ENCODE measurements at regions of chr21 and their contacts with region 1.

Region 1: GRCh38 chr21:45140346-45140940 is 66.1 kb downstream of the ADARB1 start:
- DNase-seq: peak in 1 of 2 donors; percentile 85
- H3K4me3 ChIP-seq: no peak overlapping the region
- H3K27ac ChIP-seq: no peak overlapping the region
- H3K4me1 ChIP-seq: peaks cover 0 to 20% of the 10 kb centered on the region in 2 donors
- H3K27me3 ChIP-seq: no peaks in the 10 kb centered on the region
- CTCF ChIP-seq: peak; percentile 57 to 73 (median 71)

Region 2: DNA sequence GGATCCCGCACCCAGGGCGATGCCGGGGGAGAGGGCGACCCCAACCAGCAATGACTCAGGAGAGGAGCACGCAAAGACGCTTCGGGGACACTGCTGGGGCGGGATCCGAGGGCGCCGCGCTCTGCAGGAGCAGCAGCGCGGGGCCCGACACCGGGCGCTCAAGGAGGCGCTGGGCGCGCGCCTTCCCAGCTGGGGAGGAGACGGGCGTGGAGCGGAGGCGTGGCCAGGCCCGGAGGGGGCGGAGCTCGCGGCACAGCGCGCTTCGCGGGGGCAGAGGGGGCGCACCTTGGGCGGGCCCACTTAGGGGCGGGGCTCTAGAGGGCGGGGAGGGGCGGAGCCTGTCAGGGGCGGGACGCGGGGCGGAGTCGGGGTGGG is 322.9 kb before region 1 on chr21:
- intact Hi-C with region 1: loop called (anchors 10 kb)
- DNase-seq: peak; percentile 51 to 93
- H3K4me3 ChIP-seq: peak overlapping the region; percentile 60 to 85
- H3K27ac ChIP-seq: peak overlapping the region; percentile 73 to 82
- H3K4me1 ChIP-seq: peaks cover 5 to 12% of the 10 kb centered on the region in 2 donors
- H3K27me3 ChIP-seq: no peaks in the 10 kb centered on the region
- CTCF ChIP-seq: no peak

Region 3: GRCh38 chr21:44892536-44893277 is 247.7 kb before region 1 on chr21:
- intact Hi-C with region 1: loop called (anchors 2 kb)
- DNase-seq: peak in 1 of 2 donors; percentile 83
- H3K4me3 ChIP-seq: no peak overlapping the region
- H3K27ac ChIP-seq: no peak overlapping the region
- H3K4me1 ChIP-seq: no peaks in the 10 kb centered on the region
- H3K27me3 ChIP-seq: no peaks in the 10 kb centered on the region
- CTCF ChIP-seq: peak; percentile 73 to 88 (median 86)

Region 4: GRCh38 chr21:45192332-45192731 is 51.9 kb after region 1 on chr21:
- intact Hi-C with region 1: no loop called
- DNase-seq: no peak
- H3K4me3 ChIP-seq: no peak overlapping the region
- H3K27ac ChIP-seq: no peak overlapping the region
- H3K4me1 ChIP-seq: no peaks in the 10 kb centered on the region
- H3K27me3 ChIP-seq: no peaks in the 10 kb centered on the region
- CTCF ChIP-seq: no peak

Region 5: GRCh38 chr21:45287438-45288391 is 147.3 kb after region 1 on chr21 and contains the start of gene POFUT2:
- intact Hi-C with region 1: loop called (anchors 5 kb)
- DNase-seq: peak; percentile 83 to 98
- H3K4me3 ChIP-seq: peak within 1 kb of the TSS; percentile 61 to 98
- H3K27ac ChIP-seq: peak within 1 kb of the TSS; percentile 83 to 88
- H3K4me1 ChIP-seq: peaks cover 11 to 20% of the 10 kb centered on the region in 2 donors
- H3K27me3 ChIP-seq: no peaks in the 10 kb centered on the region
- CTCF ChIP-seq: peak in 1 of 3 experiments; percentile 5
- total RNA-seq, gene POFUT2: 39.4 TPM

Region 6: DNA sequence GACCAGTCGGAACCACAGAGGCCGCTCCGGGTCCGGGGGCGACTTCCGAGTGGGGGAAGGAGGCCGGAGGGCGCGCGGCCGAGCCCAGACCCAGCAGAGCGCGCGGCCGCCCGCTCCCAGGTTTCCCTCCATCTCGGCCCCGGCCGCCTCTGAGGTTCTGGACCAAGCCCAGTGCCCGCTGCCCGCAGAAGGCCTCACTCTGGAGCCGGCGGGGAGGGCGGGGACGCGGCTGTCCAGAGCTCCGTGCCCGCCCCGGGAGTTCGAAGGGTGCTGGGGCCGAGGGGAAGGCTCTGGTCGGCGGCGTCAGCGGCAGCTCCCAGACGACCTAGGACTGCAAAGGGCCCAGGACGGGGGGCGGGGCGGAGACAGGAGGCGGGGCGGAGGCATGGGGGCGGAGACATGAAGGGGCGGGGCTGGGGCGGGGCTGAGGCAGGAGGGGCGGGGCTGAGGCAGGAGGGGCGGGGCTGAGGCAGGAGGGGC is 449.8 kb after region 1 on chr21:
- intact Hi-C with region 1: no loop called
- DNase-seq: no peak
- H3K4me3 ChIP-seq: peak overlapping the region; percentile 42 to 48
- H3K27ac ChIP-seq: no peak overlapping the region
- H3K4me1 ChIP-seq: peaks cover 0 to 5% of the 10 kb centered on the region in 2 donors
- H3K27me3 ChIP-seq: no peaks in the 10 kb centered on the region
- CTCF ChIP-seq: no peak

Measured in ascending aorta (tissue), 2 donors.